Endothelial cell of umbilical vein (primary cell): ENCODE measurements at regions of chr1 and their contacts with region 1.

Region 1: DNA sequence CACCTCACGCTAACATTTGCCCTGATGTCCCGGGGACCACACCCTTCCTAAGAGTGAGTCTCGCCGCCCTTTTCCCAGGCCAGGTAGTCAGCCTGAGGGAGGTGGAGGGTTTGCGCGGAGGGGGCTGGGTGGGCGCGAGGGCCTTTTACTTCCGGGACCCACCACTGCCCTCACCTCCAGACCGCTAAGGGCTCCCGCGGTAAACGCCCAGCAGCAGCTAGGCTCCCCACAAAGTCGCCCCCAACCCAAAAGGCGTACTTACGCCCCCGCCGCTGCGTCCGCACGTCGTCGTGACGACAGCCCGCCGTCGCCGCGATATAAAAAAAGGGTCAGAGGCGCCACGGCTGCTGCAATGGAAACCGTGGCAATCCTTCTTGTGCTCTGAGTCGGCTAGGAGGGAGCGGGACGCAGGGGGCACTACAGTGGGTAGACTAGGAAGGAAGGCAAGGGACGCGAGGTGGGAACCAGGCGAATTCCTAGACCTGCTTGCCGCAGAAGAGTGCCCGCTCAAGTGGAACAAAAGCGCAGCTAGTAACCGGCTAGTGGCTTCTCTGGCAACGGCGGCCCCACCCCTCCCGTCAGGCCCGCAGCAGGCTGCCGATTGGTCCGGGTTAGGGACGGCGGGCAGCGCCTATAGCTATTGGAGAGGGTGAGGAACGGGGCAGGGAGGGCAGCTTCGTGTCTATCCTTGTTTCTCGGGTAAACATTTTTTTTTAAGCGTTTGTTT is at the start of gene ODF2L:
- DNase-seq: peak; percentile 90
- H3K4me3 ChIP-seq: peak within 1 kb of the TSS; percentile 85 to 96 (median 85)
- H3K27ac ChIP-seq: peak within 1 kb of the TSS; percentile 72
- H3K4me1 ChIP-seq: peaks cover 28% of the 10 kb centered on the region
- H3K27me3 ChIP-seq: peaks cover 0 to 2% of the 10 kb centered on the region in 2 experiments
- CTCF ChIP-seq: no peak
- POLR2A ChIP-seq: peak; percentile 57
- total RNA-seq, gene ODF2L: 74.7 and 86.3 TPM in 2 replicates

Region 2: GRCh38 chr1:86499987-86500593 is 104.2 kb after region 1 on chr1:
- CTCF ChIA-PET with region 1: interaction called, 3 read pairs
- POLR2A ChIA-PET with region 1: no interaction called
- dilution Hi-C with region 1: no loop called
- intact Hi-C with region 1: loop called (anchors 5 kb)
- DNase-seq: peak; percentile 9
- H3K4me3 ChIP-seq: no peak overlapping the region
- H3K27ac ChIP-seq: no peak overlapping the region
- H3K4me1 ChIP-seq: no peaks in the 10 kb centered on the region
- H3K27me3 ChIP-seq: peaks cover 5 to 13% of the 10 kb centered on the region in 2 experiments
- CTCF ChIP-seq: peak; percentile 60 to 83
- POLR2A ChIP-seq: no peak

Region 3: GRCh38 chr1:86733340-86733739 is 337.4 kb after region 1 on chr1:
- CTCF ChIA-PET with region 1: no interaction called
- POLR2A ChIA-PET with region 1: no interaction called
- dilution Hi-C with region 1: no loop called
- intact Hi-C with region 1: loop called (anchors 5 kb)
- DNase-seq: no peak
- H3K4me3 ChIP-seq: no peak overlapping the region
- H3K27ac ChIP-seq: no peak overlapping the region
- H3K4me1 ChIP-seq: no peaks in the 10 kb centered on the region
- H3K27me3 ChIP-seq: no peaks in the 10 kb centered on the region
- CTCF ChIP-seq: no peak
- POLR2A ChIP-seq: no peak